Heart right ventricle (tissue), 16 donors: ENCODE measurements at regions of chr5 and their contacts with region 1.

Region 1: DNA sequence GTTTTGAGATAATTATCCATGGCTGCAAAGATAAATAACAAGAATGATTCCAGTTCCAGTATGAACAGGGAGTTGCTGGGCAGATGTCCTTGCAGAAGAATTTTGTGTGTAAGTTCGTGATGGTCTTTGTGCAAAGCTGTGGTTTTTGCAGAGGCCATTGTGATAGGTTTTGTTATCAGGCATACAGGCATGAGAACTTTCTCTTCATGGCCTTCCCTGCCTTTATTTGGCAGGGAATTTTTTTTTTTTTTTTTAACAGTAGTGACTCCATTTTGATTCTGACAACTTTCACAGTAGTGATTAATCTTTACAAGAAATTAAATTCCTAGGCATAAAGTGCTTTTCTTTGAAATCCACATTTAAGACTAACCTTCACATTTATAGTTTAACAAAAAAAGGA is 1999.5 kb upstream of the CDH6 start:
- DNase-seq: no peak
- ATAC-seq: no peak
- H3K4me3 ChIP-seq: no peak overlapping the region
- H3K27ac ChIP-seq: no peak overlapping the region
- H3K4me1 ChIP-seq: no peaks in the 10 kb centered on the region
- H3K27me3 ChIP-seq: no peaks in the 10 kb centered on the region
- CTCF ChIP-seq: no peak

Region 2: DNA sequence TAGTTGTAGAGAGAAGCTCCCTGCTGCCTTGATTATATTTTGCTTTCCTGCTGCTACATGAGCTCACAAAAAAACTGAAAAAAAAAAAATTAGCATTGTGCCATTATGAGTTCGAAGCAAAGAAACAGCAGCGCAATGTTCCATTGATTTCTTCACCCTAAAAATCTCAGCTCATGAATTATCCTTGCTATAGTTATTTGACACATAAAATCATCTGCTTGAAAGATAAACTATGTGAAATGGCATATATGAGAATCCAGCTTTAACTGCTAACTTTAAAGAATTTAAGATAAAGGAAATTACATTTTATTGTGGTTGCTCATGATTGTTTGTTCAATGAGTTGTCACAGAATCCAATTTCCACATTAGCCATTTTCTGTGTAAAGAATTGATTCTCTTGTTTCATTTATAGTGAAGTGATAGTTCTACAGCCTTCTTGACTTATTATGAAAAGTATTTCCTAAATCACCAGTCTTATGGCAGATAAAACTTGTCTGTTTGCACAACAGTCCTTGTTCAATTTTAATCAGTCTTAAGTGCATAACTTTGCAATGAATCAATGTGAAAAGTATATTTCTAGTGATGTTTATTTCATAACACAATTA is 880.5 kb before region 1 on chr5:
- intact Hi-C with region 1: no loop called
- DNase-seq: no peak
- ATAC-seq: no peak
- H3K4me3 ChIP-seq: no peak overlapping the region
- H3K27ac ChIP-seq: no peak overlapping the region
- H3K4me1 ChIP-seq: no peaks in the 10 kb centered on the region
- H3K27me3 ChIP-seq: no peaks in the 10 kb centered on the region
- CTCF ChIP-seq: no peak

Region 3: DNA sequence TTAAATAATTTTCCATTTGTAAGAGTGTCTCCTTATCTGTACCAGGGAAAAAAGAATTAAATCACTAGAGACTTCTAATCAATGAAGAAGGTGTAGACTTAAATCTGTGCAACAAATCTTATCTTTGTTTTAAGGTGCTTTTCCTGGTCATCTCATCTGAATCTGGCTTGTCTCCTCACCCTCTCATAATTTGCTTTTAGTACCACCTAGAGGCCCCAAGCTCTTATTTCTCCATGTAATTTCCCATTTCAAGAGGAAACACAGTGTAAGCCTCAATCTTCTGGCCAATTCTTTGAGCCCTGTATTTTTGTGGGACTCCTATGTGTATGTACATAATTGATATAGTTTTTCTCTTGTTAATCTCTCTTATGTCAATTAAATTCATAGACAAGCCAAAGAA is 24.2 kb after region 1 on chr5:
- intact Hi-C with region 1: loop called in 1 of 10 experiments (anchors 2 kb)
- DNase-seq: no peak
- ATAC-seq: no peak
- H3K4me3 ChIP-seq: no peak overlapping the region
- H3K27ac ChIP-seq: no peak overlapping the region
- H3K4me1 ChIP-seq: no peaks in the 10 kb centered on the region
- H3K27me3 ChIP-seq: no peaks in the 10 kb centered on the region
- CTCF ChIP-seq: no peak